Right ventricle myocardium superior (tissue), 1 donor: ENCODE measurements at regions of chr13 and their contacts with region 1.

Region 1: DNA sequence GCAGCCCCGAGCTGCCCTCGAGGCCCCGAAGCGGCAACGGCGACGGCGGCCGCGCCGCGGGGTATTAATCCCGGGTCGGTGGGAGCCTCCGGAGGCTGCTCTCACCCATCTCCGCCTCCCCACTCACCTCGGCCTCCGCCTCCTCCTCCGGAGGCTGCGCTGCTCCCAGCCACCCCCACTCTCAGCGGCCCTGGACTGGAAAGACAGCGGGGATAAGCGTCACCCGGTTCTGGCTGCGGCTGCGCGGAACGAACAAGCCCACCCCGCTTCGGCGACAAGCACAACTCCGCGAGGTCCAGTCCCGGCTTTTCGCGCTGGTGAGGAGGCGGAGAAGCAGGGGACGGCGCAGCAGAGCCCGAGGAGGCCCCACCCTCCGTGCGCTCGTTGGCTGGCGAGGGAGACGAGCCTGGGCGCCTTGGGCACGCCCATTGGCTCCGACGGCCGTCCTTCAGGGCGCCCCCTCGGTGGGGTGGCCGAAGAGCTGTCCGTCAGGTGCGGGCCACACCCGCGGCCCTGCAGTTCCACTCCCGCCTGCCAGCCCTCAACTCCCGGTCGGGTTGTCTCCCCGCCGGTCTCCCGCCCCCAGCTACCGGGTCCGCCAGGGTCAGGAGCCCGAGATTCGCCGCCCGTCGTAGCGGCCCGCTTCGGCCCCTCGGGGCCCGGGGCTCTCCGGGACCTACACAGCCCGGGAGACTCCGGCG is at the start of gene ZMYM5:
- DNase-seq: peak; percentile 99
- ATAC-seq: peak; percentile 96
- total RNA-seq, gene ZMYM5: 6.5 TPM

Region 2: DNA sequence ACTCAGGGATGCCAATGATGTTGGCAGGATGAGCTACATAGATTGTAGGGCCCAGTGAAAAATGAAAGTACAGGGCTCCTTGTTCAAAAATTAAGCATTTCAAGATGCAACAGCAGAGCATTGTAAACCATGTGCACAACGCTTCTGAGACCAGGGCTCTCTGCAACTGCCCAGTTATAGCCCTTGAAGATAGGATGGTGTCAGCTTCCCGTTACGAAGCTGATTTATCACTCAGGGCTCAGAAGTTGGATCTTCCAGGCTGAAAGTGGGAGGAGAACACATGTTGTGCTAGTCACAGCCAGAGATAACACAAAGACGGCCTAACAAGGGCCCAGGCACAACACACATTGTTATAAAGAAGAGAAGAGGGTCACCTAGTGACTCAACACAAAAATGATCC is 1148.6 kb before region 1 on chr13:
- intact Hi-C with region 1: no loop called
- DNase-seq: no peak
- ATAC-seq: no peak

Region 3: DNA sequence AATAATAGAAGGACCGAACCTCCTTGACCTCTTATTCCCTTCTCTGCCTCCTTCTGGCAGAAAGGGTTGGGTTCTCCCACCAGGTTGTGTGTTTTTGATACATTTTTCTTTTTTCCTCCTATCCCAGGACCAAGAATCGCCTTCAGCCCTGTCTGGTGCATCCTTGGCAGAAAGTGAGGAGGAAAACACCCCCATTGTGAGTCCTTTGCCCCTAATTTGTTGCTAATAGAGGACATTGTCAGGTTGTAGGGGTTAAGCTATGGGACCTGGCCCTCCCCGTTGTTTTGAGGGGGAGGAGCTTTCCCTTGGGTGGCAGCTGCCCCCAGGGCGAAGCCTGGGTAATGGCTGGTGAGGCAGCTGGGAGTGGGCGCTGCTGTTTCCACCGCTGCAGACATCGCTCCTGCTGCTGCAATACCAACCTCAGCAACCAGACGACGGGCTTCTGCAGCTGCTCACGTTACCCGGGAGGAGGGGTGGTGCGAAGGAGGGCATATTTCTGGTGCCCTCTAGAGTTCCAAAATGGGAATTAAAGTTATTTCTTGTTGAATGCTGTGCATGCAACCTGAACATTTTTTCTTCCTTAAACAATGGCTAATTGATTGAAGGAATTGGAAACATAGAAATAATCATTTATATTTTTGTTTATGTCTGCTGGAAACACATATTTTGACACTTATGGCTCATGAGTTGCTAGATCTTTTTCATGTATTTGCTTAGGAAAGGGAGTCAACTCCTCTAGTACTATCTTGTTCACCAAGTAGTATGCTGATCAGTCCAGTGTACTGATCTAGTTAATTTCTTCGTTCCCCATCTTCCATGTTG is 96.6 kb after region 1 on chr13:
- intact Hi-C with region 1: loop called (anchors 5 kb)
- DNase-seq: peak; percentile 89
- ATAC-seq: peak; percentile 61